ENCODE measurements at regions of chr1 and their contacts with region 1.

Region 1: DNA sequence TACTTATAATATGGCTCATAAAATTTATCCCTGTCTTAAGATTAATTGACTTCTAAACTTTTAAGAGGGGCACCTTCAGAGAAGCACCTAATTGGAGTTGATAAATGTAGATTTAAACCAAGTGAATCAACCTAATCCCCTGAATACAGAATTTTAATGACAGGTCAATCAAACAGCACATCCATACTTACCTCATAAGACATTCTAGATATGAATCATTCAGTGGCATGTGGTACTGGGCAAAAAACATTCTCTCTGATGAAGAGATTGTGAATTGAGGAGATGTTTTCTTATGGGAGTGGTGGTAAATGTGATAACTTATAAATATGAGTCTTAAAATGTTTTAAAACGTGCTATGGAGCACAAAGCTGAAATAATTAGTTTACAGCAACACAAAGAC is 167.5 kb upstream of the PTGFR start:
- DNase-seq: no peak
- ATAC-seq: no peak
- H3K4me3 ChIP-seq: no peak overlapping the region
- H3K27ac ChIP-seq: no peak overlapping the region
- H3K4me1 ChIP-seq: no peaks in the 10 kb centered on the region
- H3K27me3 ChIP-seq: no peaks in the 10 kb centered on the region
- CTCF ChIP-seq: no peak
- EP300 ChIP-seq: no peak
- POLR2A ChIP-seq: no peak
- RAD21 ChIP-seq: no peak

Region 2: GRCh38 chr1:78303620-78304019 is 19.7 kb before region 1 on chr1:
- CTCF ChIA-PET with region 1: no interaction called
- POLR2A ChIA-PET with region 1: no interaction called
- RAD21 ChIA-PET with region 1: no interaction called
- SMC1A ChIA-PET with region 1: no interaction called
- in situ Hi-C with region 1: no loop called
- intact Hi-C with region 1: no loop called
- DNase-seq: no peak
- ATAC-seq: no peak
- H3K4me3 ChIP-seq: no peak overlapping the region
- H3K27ac ChIP-seq: no peak overlapping the region
- H3K4me1 ChIP-seq: no peaks in the 10 kb centered on the region
- H3K27me3 ChIP-seq: no peaks in the 10 kb centered on the region
- CTCF ChIP-seq: no peak
- EP300 ChIP-seq: no peak
- POLR2A ChIP-seq: no peak
- RAD21 ChIP-seq: no peak

Region 3: GRCh38 chr1:78333502-78333901 is 10.2 kb after region 1 on chr1:
- CTCF ChIA-PET with region 1: interaction called, 16 read pairs
- POLR2A ChIA-PET with region 1: no interaction called
- RAD21 ChIA-PET with region 1: no interaction called
- SMC1A ChIA-PET with region 1: no interaction called
- in situ Hi-C with region 1: no loop called
- intact Hi-C with region 1: no loop called
- DNase-seq: no peak
- ATAC-seq: peak; percentile 87
- H3K4me3 ChIP-seq: no peak overlapping the region
- H3K27ac ChIP-seq: no peak overlapping the region
- H3K4me1 ChIP-seq: no peaks in the 10 kb centered on the region
- H3K27me3 ChIP-seq: no peaks in the 10 kb centered on the region
- CTCF ChIP-seq: peak; percentile 57 to 83 (median 76)
- EP300 ChIP-seq: no peak
- POLR2A ChIP-seq: no peak
- RAD21 ChIP-seq: peak; percentile 44; the same call in 1 of the 2 replicates

Measured in GM12878 (cell line).